ENCODE measurements at regions of chr10 and their contacts with region 1.

Region 1: DNA sequence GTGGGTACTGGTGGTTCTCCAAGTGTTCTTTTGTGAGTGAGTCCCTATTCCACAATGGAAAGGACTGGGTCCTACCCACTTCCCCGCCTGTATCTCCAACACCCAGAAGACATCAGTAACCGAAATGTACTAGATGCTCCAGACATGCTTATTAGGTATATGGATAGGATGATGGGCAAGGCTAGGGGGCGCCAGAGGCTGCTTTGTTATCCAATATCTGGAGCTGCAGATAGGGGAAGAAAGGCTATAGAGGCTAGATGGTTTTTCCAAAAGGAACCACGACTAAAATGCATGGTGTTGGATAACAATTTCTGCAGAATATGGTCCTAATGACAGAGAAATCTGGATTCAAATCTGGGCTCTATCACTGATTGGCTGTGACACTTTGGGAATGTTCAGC is 56.2 kb upstream of the TM9SF3 start:
- DNase-seq: peak in 2 of 5 donors; percentile 52 to 70
- H3K4me3 ChIP-seq: no peak overlapping the region
- H3K27ac ChIP-seq: no peak overlapping the region
- H3K4me1 ChIP-seq: no peaks in the 10 kb centered on the region
- H3K27me3 ChIP-seq: no peaks in the 10 kb centered on the region
- CTCF ChIP-seq: no peak
- EP300 ChIP-seq: no peak
- POLR2A ChIP-seq: no peak

Region 2: GRCh38 chr10:96719850-96720421 is 77.0 kb after region 1 on chr10:
- intact Hi-C with region 1: loop called in 2 of 4 experiments (anchors 5 to 10 kb)
- DNase-seq: peak; percentile 55 to 77 (median 63)
- H3K4me3 ChIP-seq: peak overlapping the region; percentile 37
- H3K27ac ChIP-seq: peak overlapping the region; percentile 16 to 66
- H3K4me1 ChIP-seq: peaks cover 3% of the 10 kb centered on the region
- H3K27me3 ChIP-seq: no peaks in the 10 kb centered on the region
- CTCF ChIP-seq: peak in 2 of 3 donors; percentile 27 to 40
- EP300 ChIP-seq: no peak
- POLR2A ChIP-seq: no peak

Region 3: GRCh38 chr10:96814264-96814663 is 171.3 kb after region 1 on chr10:
- intact Hi-C with region 1: no loop called
- DNase-seq: no peak
- H3K4me3 ChIP-seq: no peak overlapping the region
- H3K27ac ChIP-seq: no peak overlapping the region
- H3K4me1 ChIP-seq: no peaks in the 10 kb centered on the region
- H3K27me3 ChIP-seq: no peaks in the 10 kb centered on the region
- CTCF ChIP-seq: no peak
- EP300 ChIP-seq: no peak
- POLR2A ChIP-seq: no peak